ENCODE measurements at regions of chr10 and their contacts with region 1.

Region 1: GRCh38 chr10:16944402-16944801 is 127.2 kb upstream of the RSU1 start:
- DNase-seq: no peak
- ATAC-seq: peak; percentile 79
- H3K4me3 ChIP-seq: no peak overlapping the region
- H3K27ac ChIP-seq: peak overlapping the region; percentile 37 to 59
- H3K4me1 ChIP-seq: peaks cover 0 to 3% of the 10 kb centered on the region in 2 donors
- H3K27me3 ChIP-seq: no peaks in the 10 kb centered on the region

Region 2: DNA sequence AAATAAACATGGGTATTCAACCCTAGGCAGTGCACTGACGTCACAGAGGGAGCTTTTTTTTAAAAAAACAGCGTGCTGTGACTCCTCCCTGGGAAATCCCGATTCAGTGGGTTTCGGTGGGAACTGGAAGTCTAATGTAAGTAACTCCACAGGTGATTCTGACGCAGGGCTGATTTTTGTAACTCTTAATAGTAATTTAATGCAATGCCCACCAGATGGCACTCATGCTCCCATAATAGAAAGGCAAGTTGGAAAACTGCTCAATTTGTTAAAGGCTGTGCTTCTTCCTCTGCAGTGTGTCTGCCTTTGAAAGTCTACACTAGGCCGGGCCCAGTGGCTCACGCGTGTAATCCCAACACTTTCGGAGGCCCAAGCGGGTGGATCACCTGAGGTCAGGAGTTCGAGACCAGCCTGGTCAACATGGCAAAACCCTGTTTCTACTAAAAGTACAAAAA is 116.3 kb before region 1 on chr10:
- intact Hi-C with region 1: no loop called
- DNase-seq: peak in 1 of 2 donors; percentile 66
- ATAC-seq: peak; percentile 93
- H3K4me3 ChIP-seq: peak overlapping the region in 1 of 2 donors; percentile 26
- H3K27ac ChIP-seq: peak overlapping the region in 1 of 2 donors; percentile 4
- H3K4me1 ChIP-seq: no peaks in the 10 kb centered on the region
- H3K27me3 ChIP-seq: no peaks in the 10 kb centered on the region

Region 3: DNA sequence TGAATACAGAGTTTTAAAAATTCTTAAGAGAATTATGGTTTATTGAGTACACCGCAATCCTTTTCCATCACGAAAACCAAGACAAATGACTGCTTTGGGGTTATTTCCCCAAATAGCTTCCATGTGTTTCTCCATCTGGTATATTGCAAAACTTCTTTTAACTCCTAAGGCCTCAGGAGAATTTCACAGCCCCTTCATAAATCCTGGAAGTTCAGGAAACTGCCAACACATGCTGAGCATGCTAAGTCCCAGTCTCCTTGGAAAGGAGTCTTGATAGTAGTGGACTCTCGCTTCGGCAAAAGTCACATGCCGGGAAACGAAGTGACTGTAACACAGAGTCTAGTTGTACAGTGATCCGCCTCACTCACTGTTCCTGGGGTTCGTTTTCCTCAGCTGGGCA is 39.1 kb before region 1 on chr10:
- intact Hi-C with region 1: no loop called
- DNase-seq: no peak
- ATAC-seq: peak; percentile 59
- H3K4me3 ChIP-seq: no peak overlapping the region
- H3K27ac ChIP-seq: no peak overlapping the region
- H3K4me1 ChIP-seq: no peaks in the 10 kb centered on the region
- H3K27me3 ChIP-seq: no peaks in the 10 kb centered on the region

Region 4: GRCh38 chr10:16995867-16996529 is 51.6 kb after region 1 on chr10:
- intact Hi-C with region 1: loop called in 1 of 2 experiments (anchors 10 kb)
- DNase-seq: no peak
- ATAC-seq: peak; percentile 68
- H3K4me3 ChIP-seq: no peak overlapping the region
- H3K27ac ChIP-seq: peak overlapping the region in 1 of 2 donors; percentile 83
- H3K4me1 ChIP-seq: peaks cover 0 to 7% of the 10 kb centered on the region in 2 donors
- H3K27me3 ChIP-seq: no peaks in the 10 kb centered on the region

Region 5: DNA sequence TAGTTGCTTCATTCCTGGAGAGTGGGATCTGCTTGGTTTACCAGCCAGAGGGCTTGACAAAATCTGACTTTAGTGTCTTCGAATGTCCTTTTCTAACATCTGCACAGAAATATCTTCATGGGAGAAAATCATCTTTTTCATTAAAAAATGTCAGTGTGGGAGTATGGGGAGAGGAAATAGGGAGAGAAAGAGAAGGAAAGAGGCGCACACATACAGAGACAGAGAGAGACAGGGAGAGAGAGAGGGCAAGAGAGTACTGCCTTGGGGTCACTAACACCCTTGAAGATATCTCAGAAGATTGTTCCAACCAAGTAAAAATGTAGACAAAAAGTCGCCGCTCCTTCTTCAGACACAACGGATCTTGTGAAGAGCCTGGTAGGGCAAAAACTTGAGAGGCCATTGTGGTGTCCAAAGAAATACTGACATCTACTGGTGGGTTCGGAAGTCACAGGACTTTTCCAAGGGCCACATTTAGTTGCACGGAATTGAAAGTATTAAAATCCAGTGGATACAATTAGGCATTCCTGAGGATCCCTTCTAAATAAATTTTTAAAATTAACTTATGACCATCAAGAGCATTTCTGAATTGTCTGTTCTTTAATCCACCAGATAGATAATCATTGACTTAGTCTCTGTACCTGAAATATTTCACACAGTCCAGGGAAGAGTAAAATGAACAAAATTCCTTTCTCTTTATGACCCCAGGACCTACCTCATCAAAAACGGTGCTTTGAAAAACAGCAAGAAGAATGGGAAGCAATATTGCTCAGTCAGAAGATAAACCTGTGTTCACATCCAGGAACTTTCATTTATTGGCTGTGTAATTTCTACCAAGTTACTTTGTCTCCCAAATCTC is 313.3 kb after region 1 on chr10:
- intact Hi-C with region 1: loop called in 1 of 2 experiments (anchors 5 kb)
- DNase-seq: no peak
- ATAC-seq: peak; percentile 94
- H3K4me3 ChIP-seq: no peak overlapping the region
- H3K27ac ChIP-seq: no peak overlapping the region
- H3K4me1 ChIP-seq: no peaks in the 10 kb centered on the region
- H3K27me3 ChIP-seq: no peaks in the 10 kb centered on the region

Region 6: GRCh38 chr10:17805921-17806577 is 861.6 kb after region 1 on chr10:
- intact Hi-C with region 1: no loop called
- DNase-seq: no peak
- ATAC-seq: no peak
- H3K4me3 ChIP-seq: no peak overlapping the region
- H3K27ac ChIP-seq: no peak overlapping the region
- H3K4me1 ChIP-seq: no peaks in the 10 kb centered on the region
- H3K27me3 ChIP-seq: no peaks in the 10 kb centered on the region